HepG2 (cell line): ENCODE measurements at regions of chr18 and their contacts with region 1.

Region 1: GRCh38 chr18:23377669-23378301 is 75.3 kb upstream of the RIOK3 start:
- DNase-seq: peak; percentile 60
- ATAC-seq: no peak; the same call in 2 of the 3 replicates
- H3K4me3 ChIP-seq: no peak overlapping the region
- H3K27ac ChIP-seq: no peak overlapping the region
- H3K4me1 ChIP-seq: peaks cover 33% of the 10 kb centered on the region
- H3K27me3 ChIP-seq: no peaks in the 10 kb centered on the region
- CTCF ChIP-seq: no peak
- EP300 ChIP-seq: no peak
- POLR2A ChIP-seq: no peak
- RAD21 ChIP-seq: no peak

Region 2: DNA sequence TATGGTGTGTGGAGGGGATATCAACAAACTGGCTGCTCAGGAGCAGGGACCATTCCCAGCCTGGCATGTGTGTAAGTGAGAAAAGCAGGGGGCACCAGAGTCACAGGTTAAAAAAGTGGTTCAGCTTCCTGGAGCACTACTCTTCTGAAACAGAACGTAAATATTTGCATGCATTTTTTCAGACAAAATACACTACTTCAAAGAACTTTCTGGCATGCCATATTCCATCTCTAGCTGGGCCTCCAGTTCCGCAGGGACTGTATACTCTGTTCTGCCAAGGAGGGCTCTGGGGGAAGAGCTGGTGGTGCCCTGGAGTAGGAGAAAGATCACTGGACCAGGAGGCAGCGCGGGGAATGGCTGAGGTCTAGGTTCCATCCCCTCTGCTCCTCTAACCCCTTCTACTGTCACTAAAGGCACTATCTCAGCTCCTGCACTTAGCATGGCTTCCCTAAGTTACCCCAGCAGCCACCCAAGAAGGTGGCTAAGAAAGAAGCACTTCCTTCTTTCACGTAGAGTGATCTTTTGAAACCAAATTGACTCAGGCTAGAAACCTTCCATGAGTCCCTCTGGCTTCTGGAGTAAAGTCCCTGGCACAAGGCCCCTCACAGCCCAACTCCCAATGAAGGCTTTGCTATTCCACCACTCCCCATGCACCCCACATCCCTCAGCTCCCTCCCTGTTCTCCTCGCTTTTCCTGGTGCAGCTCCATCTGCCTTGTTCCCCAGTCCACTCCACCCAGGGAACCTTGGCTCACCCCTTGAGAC is 300.1 kb before region 1 on chr18:
- CTCF ChIA-PET with region 1: interaction called, 7 read pairs
- POLR2A ChIA-PET with region 1: no interaction called
- in situ Hi-C with region 1: no loop called
- intact Hi-C with region 1: loop called (anchors 1 kb)
- DNase-seq: peak; percentile 75
- ATAC-seq: peak; percentile 95
- H3K4me3 ChIP-seq: peak overlapping the region in 1 of 3 experiments; percentile 36; a peak in 1 of 6 replicates
- H3K27ac ChIP-seq: no peak overlapping the region
- H3K4me1 ChIP-seq: peaks cover 28% of the 10 kb centered on the region
- H3K27me3 ChIP-seq: 0 out of 5 replicates have a peak, but pooled peaks cover 0 to 2% of the 10 kb centered on the region in 2 experiments
- CTCF ChIP-seq: peak; percentile 83
- EP300 ChIP-seq: no peak; a peak in 1 of 4 replicates
- POLR2A ChIP-seq: no peak
- RAD21 ChIP-seq: peak; percentile 81

Region 3: DNA sequence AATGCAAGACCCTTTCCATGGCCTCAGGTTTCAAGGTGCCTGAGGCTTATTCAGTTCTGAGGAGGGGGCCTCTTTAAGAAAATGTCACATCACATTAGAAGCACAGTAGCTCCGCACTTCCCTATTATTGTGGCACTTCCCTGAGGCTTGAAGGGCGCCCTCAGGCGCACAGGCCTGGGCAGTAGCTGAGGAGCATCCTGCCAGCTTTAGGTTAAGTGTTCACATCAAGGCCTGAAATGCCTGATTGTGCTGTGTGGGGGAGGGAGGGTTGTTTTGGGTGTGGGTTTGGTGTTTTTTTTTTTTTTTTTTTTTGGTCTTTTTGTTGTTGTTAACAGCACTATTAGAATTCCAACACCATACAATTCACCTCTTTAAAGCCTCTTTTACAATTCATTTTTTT is 134.6 kb before region 1 on chr18:
- CTCF ChIA-PET with region 1: no interaction called
- POLR2A ChIA-PET with region 1: no interaction called
- in situ Hi-C with region 1: no loop called
- intact Hi-C with region 1: loop called (anchors 5 kb)
- DNase-seq: no peak
- ATAC-seq: no peak
- H3K4me3 ChIP-seq: no peak overlapping the region
- H3K27ac ChIP-seq: no peak overlapping the region
- H3K4me1 ChIP-seq: peaks cover 14% of the 10 kb centered on the region
- H3K27me3 ChIP-seq: no peaks in the 10 kb centered on the region
- CTCF ChIP-seq: no peak
- EP300 ChIP-seq: no peak
- POLR2A ChIP-seq: no peak
- RAD21 ChIP-seq: no peak

Region 4: GRCh38 chr18:23259701-23260582 is 117.8 kb before region 1 on chr18:
- CTCF ChIA-PET with region 1: no interaction called
- POLR2A ChIA-PET with region 1: no interaction called
- in situ Hi-C with region 1: no loop called
- intact Hi-C with region 1: loop called (anchors 5 kb)
- DNase-seq: peak; percentile 56
- ATAC-seq: peak; percentile 60
- H3K4me3 ChIP-seq: peak overlapping the region in 2 of 3 experiments; percentile 15 to 43; a peak in 2 of 6 replicates
- H3K27ac ChIP-seq: peak overlapping the region; percentile 54
- H3K4me1 ChIP-seq: peaks cover 63% of the 10 kb centered on the region
- H3K27me3 ChIP-seq: no peaks in the 10 kb centered on the region
- CTCF ChIP-seq: no peak
- EP300 ChIP-seq: no peak
- POLR2A ChIP-seq: no peak
- RAD21 ChIP-seq: no peak

Region 5: DNA sequence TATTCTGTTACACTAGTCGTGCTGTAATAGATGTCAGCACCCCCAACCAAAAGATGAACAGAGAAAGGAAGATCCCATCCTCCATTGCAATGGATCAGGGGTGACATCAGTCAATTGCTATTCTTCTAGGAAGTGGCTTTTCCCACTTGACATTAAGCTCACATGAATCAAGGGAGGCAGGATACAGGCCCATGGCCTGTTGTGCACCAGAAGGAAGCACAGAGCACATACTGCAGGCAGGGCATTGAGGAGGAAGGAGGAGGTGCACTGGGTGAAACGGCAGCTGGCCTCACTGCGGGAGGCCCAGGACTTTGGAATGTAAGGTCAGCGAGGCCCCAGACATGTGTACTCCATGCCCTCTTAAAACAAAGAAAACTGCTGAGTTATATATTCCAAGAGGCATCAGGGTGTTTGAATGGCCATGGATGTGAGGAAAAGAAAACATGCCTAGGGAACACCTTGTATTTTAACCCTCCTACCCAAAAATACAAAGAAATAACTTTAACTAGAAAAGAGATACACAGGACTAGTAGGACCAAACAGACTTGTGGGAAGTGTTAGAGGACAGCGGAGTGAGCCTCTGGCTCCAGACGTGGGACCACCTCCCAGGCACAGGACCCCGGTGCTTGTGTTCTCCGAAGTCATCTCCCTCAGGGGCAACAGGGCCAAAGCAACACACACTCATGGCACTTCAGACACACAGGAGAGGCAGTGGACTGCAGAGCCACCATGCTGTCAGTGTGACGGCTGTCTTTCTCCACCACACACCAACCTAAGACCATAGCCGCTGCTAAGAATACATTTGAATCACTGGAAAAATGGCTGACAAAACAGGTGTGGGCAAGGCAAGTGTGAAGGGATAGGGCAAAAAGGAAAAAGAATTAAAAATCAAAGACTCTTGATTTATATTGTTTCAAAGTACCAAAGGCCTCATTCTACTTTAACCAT is 23.9 kb after region 1 on chr18:
- CTCF ChIA-PET with region 1: no interaction called
- POLR2A ChIA-PET with region 1: no interaction called
- in situ Hi-C with region 1: no loop called
- intact Hi-C with region 1: loop called (anchors 2 kb)
- DNase-seq: peak; percentile 81
- ATAC-seq: peak; percentile 96
- H3K4me3 ChIP-seq: peak overlapping the region in 1 of 3 experiments; percentile 38; a peak in 1 of 6 replicates
- H3K27ac ChIP-seq: peak overlapping the region; percentile 83
- H3K4me1 ChIP-seq: peaks cover 46% of the 10 kb centered on the region
- H3K27me3 ChIP-seq: no peaks in the 10 kb centered on the region
- CTCF ChIP-seq: no peak
- EP300 ChIP-seq: peak in 1 of 2 experiments; percentile 82; a peak in 2 of 4 replicates
- POLR2A ChIP-seq: no peak
- RAD21 ChIP-seq: no peak